ENCODE measurements at regions of chr11 and their contacts with region 1.

Region 1: GRCh38 chr11:6389921-6390724 is at the start of gene SMPD1:
- DNase-seq: peak; percentile 88 to 92 (median 90)
- H3K4me3 ChIP-seq: peak within 1 kb of the TSS; percentile 65
- H3K27ac ChIP-seq: peak within 1 kb of the TSS; percentile 73 to 77
- H3K4me1 ChIP-seq: peaks cover 3% of the 10 kb centered on the region
- H3K27me3 ChIP-seq: no peaks in the 10 kb centered on the region
- CTCF ChIP-seq: no peak
- EP300 ChIP-seq: no peak
- POLR2A ChIP-seq: no peak
- total RNA-seq, gene SMPD1: 12.9 to 35.4 (median 30.7) TPM

Region 2: GRCh38 chr11:5646139-5646538 is 744.0 kb before region 1 on chr11:
- intact Hi-C with region 1: no loop called
- DNase-seq: no peak
- H3K4me3 ChIP-seq: no peak overlapping the region
- H3K27ac ChIP-seq: no peak overlapping the region
- H3K4me1 ChIP-seq: no peaks in the 10 kb centered on the region
- H3K27me3 ChIP-seq: no peaks in the 10 kb centered on the region
- CTCF ChIP-seq: no peak
- EP300 ChIP-seq: no peak
- POLR2A ChIP-seq: no peak

Region 3: GRCh38 chr11:6682936-6683861 is 293.1 kb after region 1 on chr11 and contains the start of gene MRPL17:
- intact Hi-C with region 1: loop called in 1 of 4 experiments (anchors 10 kb)
- DNase-seq: peak; percentile 99 to 100 (median 99)
- H3K4me3 ChIP-seq: peak within 1 kb of the TSS; percentile 92
- H3K27ac ChIP-seq: peak within 1 kb of the TSS; percentile 84 to 89
- H3K4me1 ChIP-seq: peaks cover 4% of the 10 kb centered on the region
- H3K27me3 ChIP-seq: no peaks in the 10 kb centered on the region
- CTCF ChIP-seq: peak; percentile 92 to 95 (median 95)
- EP300 ChIP-seq: no peak
- POLR2A ChIP-seq: peak; percentile 48
- total RNA-seq, gene MRPL17: 23.0 to 37.9 (median 30.7) TPM

Region 4: GRCh38 chr11:6705905-6706535 is 315.9 kb after region 1 on chr11:
- intact Hi-C with region 1: loop called in 1 of 4 experiments (anchors 10 kb)
- DNase-seq: peak in 3 of 5 donors; percentile 25 to 67 (median 45)
- H3K4me3 ChIP-seq: no peak overlapping the region
- H3K27ac ChIP-seq: no peak overlapping the region
- H3K4me1 ChIP-seq: no peaks in the 10 kb centered on the region
- H3K27me3 ChIP-seq: no peaks in the 10 kb centered on the region
- CTCF ChIP-seq: peak; percentile 69 to 77 (median 75)
- EP300 ChIP-seq: no peak
- POLR2A ChIP-seq: no peak

Region 5: GRCh38 chr11:7046474-7047175 is 656.5 kb after region 1 on chr11:
- intact Hi-C with region 1: no loop called
- DNase-seq: no peak
- H3K4me3 ChIP-seq: no peak overlapping the region
- H3K27ac ChIP-seq: no peak overlapping the region
- H3K4me1 ChIP-seq: no peaks in the 10 kb centered on the region
- H3K27me3 ChIP-seq: no peaks in the 10 kb centered on the region
- CTCF ChIP-seq: no peak
- EP300 ChIP-seq: no peak
- POLR2A ChIP-seq: no peak

Measured in ovary (tissue), 10 donors.